ENCODE measurements at regions of chr7 and their contacts with region 1.

Region 1: GRCh38 chr7:76179686-76180085 is 22.0 kb upstream of the SRRM3 start:
- DNase-seq: no peak
- H3K4me3 ChIP-seq: no peak overlapping the region
- H3K27ac ChIP-seq: no peak overlapping the region
- H3K27me3 ChIP-seq: no peaks in the 10 kb centered on the region
- CTCF ChIP-seq: no peak

Region 2: GRCh38 chr7:76023002-76023401 is 156.7 kb before region 1 on chr7:
- CTCF ChIA-PET with region 1: no interaction called
- POLR2A ChIA-PET with region 1: no interaction called
- DNase-seq: no peak
- H3K4me3 ChIP-seq: no peak overlapping the region
- H3K27ac ChIP-seq: no peak overlapping the region
- H3K27me3 ChIP-seq: no peaks in the 10 kb centered on the region
- CTCF ChIP-seq: no peak

Region 3: DNA sequence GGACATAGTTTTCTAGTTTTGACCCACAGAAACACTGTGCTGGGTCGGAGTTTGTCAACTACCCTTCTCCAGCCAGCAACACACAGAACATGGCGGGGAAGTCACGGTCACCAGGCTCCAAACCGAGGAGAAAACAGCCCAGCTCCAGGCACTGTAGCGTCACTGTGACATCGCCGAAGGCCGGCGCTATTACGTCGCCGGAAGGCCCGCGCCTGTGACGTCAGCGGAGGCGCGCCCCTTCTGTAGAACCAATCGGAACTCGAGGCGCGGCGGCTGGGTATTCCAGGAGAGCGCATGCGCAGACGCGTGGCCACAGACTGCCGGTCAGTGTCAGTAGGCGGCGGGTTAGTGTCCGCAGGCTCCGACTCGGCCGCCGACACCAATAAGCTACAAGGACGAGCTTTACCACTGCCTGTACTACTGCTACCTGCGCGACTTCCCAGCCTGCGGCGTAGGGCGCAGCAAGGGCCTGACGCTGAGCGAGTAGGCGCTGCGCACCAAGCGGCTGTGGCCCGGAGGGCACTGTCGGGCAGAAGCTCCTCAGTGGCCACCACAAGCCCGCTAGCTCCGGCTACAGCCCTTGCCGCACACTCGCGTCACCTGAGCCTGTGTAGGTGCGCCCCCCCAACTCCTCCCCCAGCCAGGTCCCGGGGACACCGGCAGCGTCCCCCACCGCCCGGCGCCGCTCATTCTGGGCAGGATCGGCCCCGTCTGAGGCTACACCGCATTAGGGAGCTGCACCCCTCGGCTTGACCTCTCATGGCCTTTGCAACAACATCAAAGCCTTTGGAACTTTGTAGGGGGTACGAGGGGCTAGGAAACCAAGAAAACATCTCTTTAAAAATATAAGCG is 13.1 kb before region 1 on chr7:
- CTCF ChIA-PET with region 1: interaction called, 18 read pairs
- POLR2A ChIA-PET with region 1: no interaction called
- DNase-seq: peak; percentile 84
- H3K4me3 ChIP-seq: peak overlapping the region; percentile 82
- H3K27ac ChIP-seq: peak overlapping the region; percentile 21
- H3K27me3 ChIP-seq: no peaks in the 10 kb centered on the region
- CTCF ChIP-seq: peak; percentile 26; the same call in 1 of the 2 replicates

Region 4: DNA sequence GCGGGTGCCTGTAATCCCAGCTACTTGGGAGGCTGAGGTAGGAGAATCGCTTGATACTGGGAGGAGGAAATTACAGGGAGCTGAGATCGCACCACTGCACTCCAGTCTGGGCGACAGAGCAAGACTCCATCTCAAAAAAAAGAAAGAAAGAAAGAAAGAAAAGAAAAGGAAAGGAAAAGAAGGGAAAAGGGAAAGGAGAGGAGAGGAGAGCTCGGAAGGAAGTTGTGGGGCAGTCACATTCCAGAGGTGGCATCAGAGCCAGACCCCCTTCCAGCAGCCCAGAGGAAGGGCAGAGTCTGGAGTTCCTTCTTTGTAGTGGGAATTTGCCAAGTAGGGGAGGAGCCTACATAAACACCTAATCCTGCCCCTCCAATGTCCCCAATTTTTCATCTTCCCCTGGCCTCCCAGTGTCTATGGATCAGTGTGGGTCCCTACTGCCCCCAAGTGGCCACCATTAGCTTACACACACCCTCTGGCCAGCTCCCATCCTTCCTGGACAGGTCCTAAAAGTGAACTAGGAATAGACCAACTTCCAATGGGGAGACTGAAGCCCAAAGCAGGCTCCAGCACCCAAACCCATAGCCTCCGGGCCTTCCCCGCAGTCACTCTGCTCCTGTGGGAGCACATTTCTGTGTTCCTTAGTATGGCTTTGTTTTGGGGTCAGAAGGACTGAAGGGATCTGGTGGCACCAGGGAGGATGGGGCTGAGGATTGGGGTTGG is 83.2 kb after region 1 on chr7:
- CTCF ChIA-PET with region 1: interaction called, 18 read pairs
- POLR2A ChIA-PET with region 1: interaction called, 8 read pairs
- DNase-seq: peak; percentile 16
- H3K4me3 ChIP-seq: no peak overlapping the region
- H3K27ac ChIP-seq: no peak overlapping the region
- H3K27me3 ChIP-seq: peaks cover 32% of the 10 kb centered on the region
- CTCF ChIP-seq: peak; percentile 77

Region 5: DNA sequence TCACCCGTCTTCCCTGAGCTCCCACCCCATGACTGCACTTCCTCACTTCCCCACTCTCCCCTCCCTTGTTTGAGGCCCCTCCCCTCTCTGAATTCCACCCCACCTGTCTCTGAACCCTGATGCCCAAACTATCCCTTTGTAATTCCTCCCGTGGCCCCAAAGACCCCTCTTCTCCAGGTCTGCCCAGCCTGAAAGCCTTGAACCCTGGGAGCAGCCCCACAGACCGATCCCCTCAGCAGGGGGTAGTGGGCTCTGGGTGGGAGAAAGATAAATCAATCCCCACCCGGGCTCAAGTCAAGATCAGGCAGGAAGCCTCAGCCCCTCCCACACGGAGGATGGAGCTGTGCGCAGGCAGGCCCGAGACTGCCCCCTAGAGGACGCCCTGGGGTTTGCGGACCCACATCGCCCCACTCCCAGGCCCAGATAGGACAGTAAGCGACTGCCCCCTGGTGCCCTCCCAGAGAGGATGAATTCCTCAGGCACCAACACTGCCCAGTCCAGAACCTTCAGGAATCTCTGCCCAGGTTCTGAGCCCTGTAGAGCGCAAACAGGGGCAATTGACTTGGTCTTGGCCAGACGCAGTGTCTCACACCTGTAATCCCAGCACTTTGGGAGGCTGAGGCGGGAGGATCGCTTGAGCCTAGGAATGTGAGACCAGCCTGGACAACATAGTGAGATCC is 134.5 kb after region 1 on chr7:
- CTCF ChIA-PET with region 1: interaction called, 80 read pairs
- POLR2A ChIA-PET with region 1: interaction called, 6 read pairs
- DNase-seq: peak; percentile 84
- H3K4me3 ChIP-seq: no peak overlapping the region
- H3K27ac ChIP-seq: no peak overlapping the region
- H3K27me3 ChIP-seq: no peaks in the 10 kb centered on the region
- CTCF ChIP-seq: peak; percentile 100